Cardiac septum (tissue), 1 donor: ENCODE measurements at regions of chr20 and their contacts with region 1.

Region 1: DNA sequence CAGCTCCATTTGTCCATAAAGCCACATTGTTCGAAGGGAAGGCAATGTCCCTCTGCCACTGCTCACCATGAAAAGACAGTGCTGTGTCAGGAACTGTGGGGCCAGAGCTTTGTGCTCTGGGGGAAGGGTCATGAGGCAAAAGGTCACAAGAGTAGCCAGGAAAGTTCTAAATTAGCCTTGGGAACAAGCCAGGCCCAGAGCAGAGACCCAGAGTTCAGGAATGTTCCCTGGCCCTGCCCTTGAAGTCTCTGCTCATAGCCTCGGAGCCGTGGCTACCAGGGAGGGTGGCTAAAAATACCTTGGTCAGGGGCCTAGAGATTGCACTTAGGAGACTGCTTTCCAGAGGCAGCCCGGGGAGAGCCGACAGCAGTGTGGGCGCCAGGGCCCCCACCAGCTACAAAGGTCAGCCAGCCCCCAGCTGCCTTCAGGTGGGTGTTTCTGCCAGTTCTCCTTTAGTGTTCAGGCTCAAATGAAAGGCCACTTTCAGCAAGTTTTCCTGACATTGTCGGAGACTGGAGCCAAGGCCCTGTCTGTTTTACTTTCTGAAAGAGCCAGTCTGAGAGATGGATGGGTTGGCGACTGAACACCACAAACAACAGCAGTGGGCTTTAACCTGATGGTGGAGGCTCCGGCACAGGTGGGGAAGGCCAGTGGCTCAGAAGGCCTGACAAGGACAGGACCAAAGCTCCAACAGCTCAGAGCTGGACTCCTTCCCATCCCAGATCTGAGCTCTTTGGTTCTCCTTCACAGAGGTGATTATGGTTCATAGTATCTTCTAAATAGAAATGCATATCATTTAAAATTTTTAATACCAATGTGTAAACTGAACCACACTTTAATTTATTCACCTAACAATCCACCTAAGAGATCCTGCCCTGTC is 76.2 kb downstream of the CDH26 start:
- DNase-seq: peak; percentile 84

Region 2: DNA sequence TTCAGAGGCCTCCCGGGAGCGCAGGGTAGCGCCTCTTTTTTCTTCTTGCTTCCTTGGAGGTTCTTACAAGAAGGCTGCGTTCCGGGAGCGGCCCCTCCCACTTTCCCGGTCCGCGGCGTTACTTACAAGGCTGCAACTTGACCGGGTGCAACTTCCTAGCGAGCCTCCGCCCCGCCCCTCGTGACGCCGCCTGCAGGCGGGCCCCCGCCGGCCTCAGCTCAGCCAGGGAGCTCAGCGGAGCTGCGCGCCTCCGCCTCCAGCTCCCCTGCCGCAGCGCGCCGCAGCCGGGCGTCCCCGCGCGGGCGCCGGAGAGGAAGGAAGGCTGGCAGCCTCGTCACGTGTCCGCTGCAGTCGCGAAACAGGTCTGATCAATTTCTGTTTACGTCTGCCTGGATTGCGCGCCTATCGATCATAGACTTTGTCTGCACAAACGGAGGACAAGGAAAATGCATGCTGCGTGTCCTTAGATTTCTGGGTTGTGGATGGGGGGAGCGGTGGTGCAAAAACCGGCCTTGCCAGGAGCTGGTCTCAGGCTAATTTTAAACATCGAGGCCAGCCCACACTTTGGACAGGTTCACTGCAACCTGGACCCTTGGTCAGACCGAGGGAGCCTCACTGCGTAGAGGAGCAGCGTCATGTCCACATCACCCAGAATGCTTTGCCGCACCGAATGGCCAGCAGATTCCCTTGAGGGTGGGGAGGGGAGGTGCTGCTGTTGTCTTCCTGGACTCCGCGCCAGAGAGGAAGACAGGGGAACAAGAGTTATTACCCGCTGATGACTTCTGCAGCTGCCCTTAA is 94.1 kb before region 1 on chr20 and contains the starts of genes FAM217B and PPP1R3D:
- intact Hi-C with region 1: loop called (anchors 5 kb)
- DNase-seq: peak; percentile 99
- total RNA-seq, gene FAM217B: 15.6 TPM
- total RNA-seq, gene PPP1R3D: 7.2 TPM

Region 3: DNA sequence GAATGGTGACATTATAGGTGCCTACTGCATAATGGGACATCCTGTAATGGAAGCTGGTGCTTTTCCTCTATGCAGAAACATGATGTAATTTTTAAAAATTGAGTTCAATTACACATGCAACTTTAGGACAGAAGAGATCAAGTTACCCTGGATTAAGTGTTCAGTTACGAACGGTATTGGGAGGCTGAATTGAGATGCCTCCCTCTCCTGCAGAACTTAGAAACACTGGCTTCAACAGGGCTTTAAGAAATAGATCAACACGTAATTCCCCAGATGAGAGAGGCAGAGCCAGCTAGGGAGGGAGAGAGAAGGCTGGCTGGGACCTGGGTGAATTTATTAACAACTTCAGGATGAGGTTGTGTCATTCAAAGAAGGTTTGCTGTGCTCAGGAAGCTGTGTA is 156.5 kb after region 1 on chr20:
- intact Hi-C with region 1: no loop called
- DNase-seq: no peak